ENCODE measurements at regions of chr6 and their contacts with region 1.

Region 1: DNA sequence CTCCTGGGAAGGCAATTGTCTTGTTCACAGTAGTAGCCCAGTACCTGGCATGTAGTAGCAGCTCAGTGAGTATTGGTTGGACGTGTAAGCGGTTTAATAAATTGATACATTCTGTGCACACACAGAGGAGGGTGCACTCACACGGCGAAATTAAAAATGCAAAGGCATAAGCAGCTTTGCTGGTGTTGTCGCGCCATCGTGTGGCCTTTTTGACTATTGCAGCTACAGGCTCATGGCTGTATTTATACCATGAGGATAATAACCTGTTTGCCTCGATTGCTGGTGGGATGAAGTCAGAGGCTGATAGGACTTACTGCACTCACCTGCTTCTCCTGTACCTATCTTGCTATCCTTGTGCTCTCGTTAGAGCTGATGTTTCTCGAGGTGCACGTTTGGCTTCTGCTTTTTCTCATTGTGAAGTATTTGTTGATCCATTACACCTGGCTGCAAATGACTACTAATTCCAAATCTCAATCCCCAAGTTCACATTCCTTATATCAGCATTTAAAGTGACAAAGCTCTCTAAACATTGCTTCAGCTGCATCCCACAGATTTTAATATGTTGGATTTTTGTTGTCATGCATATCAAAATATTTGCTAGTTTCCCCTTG is 61.5 kb downstream of the TBXT start:
- DNase-seq: peak; percentile 57
- CTCF ChIP-seq: peak; percentile 92

Region 2: DNA sequence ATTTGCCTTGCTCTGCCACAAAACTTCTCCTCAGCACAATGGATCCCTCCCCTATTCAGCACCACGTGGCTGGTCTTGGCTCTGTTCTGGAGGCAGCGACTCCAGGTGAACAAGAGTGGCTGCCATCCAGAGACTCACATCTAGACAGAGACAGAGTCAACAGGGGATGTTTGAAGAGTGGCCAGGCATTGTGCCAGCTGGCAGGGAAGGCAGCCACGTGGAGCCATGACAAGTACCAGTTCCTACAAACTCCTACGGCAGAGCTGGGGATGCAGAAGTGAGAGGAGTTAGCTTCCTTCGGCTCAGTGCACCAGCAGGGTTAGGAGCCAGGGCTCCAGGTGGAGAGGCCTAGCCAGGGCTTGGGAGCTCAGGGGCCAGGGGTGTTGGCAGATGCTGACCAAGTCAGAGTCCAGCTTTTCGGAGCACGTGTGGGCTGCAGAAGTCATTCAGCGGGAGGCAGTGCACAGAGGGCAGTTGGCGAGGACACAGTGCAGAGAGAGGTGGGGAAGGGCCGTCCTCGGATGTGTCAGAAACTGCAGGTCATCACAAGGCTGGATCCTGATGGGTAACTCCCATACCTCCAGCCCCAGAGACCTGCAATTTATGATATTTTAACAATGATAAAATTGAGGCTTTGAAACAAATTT is 271.4 kb before region 1 on chr6:
- in situ Hi-C with region 1: no loop called
- DNase-seq: no peak
- CTCF ChIP-seq: no peak

Region 3: DNA sequence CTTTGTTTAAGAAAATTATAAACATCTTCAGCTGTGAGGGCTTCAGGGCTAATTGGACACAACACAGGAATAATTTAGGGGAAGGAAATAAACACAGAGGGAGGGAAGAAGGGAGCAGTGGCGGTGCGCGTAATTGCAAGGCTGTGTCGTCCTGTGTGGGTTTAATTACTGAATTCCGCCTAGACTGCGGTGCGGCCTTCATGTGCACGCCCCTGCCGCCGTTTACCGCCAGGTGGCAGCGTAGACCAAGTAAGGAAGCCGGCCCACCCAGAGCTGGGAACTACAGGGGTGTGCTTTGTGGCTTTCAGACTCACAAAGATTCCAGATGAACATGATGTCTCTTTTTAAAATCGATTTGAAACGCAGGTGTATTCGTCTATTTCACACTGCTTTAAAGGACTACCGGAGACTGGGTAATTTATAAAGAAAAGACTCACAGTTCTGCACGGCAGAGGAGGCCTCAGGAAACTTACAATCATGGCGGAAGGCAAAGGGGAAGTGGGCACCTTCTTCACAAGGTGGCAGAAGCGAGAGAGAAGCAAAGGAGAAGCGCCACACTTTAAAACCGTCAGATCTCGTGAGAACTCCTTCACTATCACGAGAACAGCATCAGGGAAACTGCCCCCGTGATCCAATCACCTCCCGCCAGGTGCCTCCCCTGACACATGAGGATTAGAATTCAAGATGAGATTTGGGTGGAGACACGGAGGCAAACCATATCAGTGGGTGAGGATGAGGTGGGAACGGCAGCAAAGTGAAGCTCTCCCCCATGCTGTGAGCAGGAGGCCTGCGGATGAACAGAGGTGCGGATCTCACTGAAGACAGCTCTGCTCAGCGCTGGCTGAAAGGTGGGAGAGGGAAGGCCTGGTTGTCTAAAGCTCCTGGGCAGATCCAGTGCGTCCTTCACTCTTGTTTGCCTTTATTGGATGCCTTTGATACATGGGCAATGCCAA is 221.1 kb before region 1 on chr6:
- in situ Hi-C with region 1: loop called (anchors 10 kb)
- DNase-seq: peak; percentile 70
- CTCF ChIP-seq: peak; percentile 93

Region 4: GRCh38 chr6:166586424-166587156 is 480.4 kb after region 1 on chr6 and contains the start of gene RAMACL:
- in situ Hi-C with region 1: no loop called
- DNase-seq: peak; percentile 84
- CTCF ChIP-seq: no peak